Activated CD4-positive, alpha-beta memory T cell treated with anti-CD3 and anti-CD28 coated beads for 36 hours (primary cell): ENCODE measurements at regions of chr6 and their contacts with region 1.

Region 1: DNA sequence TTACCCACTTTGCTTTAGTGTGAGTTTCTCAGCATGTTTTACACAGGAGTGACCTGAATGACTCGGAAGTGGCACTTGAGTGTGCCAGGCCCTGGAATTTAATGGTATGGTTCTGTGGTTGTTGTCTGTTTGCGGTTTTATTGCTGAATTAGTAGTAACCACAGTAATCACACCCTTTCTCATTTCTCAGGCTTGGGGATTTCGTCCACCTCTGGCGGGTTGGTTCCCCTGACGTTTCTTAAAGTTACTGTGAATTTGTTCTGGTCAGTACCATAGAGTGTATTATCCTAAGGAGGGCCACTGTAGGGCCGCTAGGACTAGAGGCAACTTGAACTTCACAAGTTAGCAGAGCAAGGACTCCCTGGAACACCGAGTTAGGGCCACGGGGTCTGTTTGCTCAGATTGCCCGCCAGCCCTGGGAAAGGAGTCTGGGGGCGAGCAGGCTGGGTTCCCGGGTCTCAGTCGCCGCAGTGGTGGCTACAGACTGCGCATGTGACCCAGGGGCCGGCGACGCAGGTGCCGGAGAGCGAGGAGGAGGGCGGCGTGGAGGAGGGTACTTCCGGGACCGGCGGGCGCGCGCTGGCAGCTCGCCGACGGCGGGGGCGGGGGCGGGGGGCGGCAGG is 546 bp upstream of the KLHL32 start:
- DNase-seq: no peak
- H3K4me3 Mint-ChIP-seq: peak overlapping the region; percentile 77
- H3K27ac Mint-ChIP-seq: peak overlapping the region; percentile 77
- H3K4me1 Mint-ChIP-seq: peaks cover 37% of the 10 kb centered on the region
- H3K27me3 Mint-ChIP-seq: no peaks in the 10 kb centered on the region

Region 2: DNA sequence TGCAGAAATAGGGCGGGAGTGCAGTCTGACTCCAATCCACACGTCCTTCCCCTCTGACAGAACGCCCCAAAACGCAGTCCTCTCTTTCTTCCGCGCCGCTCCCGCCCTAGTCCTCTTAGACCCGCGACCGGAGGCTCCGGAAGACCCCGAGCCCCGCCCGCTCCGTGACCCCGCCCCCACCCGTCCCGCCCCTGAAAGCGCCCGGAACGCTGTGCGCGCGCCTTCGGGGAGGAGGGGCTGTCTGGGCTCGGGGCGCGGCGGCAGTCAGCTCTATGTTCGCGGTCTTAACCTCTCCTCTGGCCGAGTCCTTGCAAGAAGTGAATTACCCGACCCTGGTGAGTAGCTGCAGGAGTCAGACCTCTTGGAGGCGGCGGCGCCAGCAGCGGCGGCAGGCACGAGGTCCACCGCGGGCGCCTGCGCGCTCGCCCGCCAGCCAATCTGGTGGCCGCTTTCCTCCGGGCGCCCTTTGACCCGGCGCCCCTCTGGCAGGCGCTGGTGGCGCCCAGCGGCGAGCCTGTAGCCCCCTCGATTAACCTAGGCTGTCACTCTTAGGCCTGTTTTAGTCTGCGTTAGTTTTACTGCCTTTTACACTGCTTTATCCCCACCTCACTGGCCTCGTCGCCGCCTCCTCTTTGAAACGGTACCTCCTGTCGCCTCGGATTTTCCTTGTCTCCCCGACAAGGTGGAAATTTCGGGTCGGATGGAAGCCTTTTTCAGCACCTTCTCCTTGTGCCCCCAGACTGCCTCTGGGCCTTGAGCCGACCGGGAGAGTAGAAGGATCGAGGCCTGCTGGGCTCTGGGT is 1346.5 kb before region 1 on chr6 and contains the start of gene MANEA:
- CTCF ChIA-PET with region 1: no interaction called
- POLR2A ChIA-PET with region 1: no interaction called
- intact Hi-C with region 1: loop called (anchors 10 kb)
- DNase-seq: peak; percentile 85
- H3K4me3 Mint-ChIP-seq: peak within 1 kb of the TSS; percentile 90
- H3K27ac Mint-ChIP-seq: peak within 1 kb of the TSS; percentile 96
- H3K4me1 Mint-ChIP-seq: peaks cover 38% of the 10 kb centered on the region
- H3K27me3 Mint-ChIP-seq: no peaks in the 10 kb centered on the region
- total RNA-seq, gene MANEA: 16.3 to 18.7 TPM

Region 3: DNA sequence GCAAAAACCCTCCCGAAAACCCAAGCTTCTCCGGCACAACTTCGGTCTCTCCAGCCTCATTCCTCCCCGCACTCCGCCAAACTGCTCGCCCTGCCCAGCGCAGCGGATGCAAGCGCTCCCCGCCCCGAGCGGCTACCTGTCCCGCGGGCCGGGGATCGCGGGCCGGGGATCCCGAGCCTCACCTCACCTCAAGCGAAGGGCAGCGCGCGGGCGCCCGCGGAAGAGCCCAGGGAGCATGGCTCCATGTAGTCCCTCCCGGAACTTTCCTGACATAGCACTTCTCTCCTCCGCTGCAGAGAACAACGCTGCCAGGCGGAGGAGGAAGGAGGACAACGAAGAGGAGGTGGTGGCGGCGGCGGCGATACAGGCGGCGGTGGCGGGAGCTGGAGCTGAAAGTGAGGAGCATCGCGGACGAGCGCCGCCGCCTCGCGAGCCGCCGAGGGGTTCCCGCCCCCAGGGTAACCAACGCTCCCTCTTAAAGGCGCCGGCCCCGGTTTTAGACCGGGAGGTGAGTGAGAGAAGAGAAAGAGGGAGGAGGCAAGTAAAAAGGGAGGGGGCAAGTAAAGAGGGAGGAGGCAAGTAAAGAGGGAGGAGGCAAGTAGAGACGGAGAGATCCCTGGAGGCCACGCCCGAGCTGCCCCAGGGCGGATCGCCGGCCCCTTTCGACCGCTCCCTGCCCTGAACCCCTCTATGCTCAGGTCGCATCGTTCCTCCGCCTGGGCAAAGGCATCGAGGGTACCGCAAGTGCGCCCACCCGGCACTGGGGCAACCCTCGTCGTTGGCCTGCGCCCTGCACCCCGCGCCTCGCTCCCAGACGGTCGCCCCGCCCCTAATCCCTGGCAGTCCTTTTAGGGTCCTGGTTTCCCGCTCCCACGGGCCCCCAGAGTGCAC is 86.7 kb before region 1 on chr6 and contains the start of gene GPR63:
- CTCF ChIA-PET with region 1: no interaction called
- POLR2A ChIA-PET with region 1: interaction called, 3 read pairs
- intact Hi-C with region 1: loop called (anchors 1 kb)
- DNase-seq: peak; percentile 87
- H3K4me3 Mint-ChIP-seq: peak within 1 kb of the TSS; percentile 95
- H3K27ac Mint-ChIP-seq: peak within 1 kb of the TSS; percentile 50
- H3K4me1 Mint-ChIP-seq: peaks cover 17% of the 10 kb centered on the region
- H3K27me3 Mint-ChIP-seq: peaks cover 16% of the 10 kb centered on the region
- total RNA-seq, gene GPR63: 1.5 to 1.7 TPM

Region 4: DNA sequence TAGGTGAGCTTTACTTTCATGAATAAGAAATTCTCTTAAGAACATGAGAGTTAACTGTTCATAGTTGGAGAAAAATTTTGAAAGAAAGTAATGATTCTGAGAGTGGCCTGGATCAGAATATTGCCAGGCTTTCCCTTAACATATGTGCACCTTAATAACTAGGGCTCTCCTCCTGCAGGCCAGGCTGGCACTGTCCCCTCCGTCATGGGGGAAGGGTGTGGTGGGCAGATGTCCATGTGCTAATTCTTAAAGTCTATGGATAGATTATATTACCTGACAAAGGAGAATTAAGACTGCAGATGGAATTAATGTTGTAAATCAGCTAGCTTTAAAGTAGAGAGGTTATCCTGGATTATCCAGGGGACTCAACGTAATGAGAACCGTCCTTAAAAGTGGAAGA is 10.4 kb before region 1 on chr6:
- CTCF ChIA-PET with region 1: interaction called, 8 read pairs
- POLR2A ChIA-PET with region 1: interaction called, 29 read pairs
- intact Hi-C with region 1: loop called (anchors 1 kb)
- DNase-seq: no peak
- H3K4me3 Mint-ChIP-seq: no peak overlapping the region
- H3K27ac Mint-ChIP-seq: no peak overlapping the region
- H3K4me1 Mint-ChIP-seq: peaks cover 4% of the 10 kb centered on the region
- H3K27me3 Mint-ChIP-seq: peaks cover 34% of the 10 kb centered on the region

Region 5: GRCh38 chr6:96947055-96947454 is 23.1 kb after region 1 on chr6:
- CTCF ChIA-PET with region 1: interaction called, 4 read pairs
- POLR2A ChIA-PET with region 1: no interaction called
- intact Hi-C with region 1: loop called (anchors 2 kb)
- DNase-seq: peak; percentile 15
- H3K4me3 Mint-ChIP-seq: no peak overlapping the region
- H3K27ac Mint-ChIP-seq: no peak overlapping the region
- H3K4me1 Mint-ChIP-seq: peaks cover 7% of the 10 kb centered on the region
- H3K27me3 Mint-ChIP-seq: no peaks in the 10 kb centered on the region

Region 6: GRCh38 chr6:97040355-97040860 is 116.4 kb after region 1 on chr6:
- CTCF ChIA-PET with region 1: no interaction called
- POLR2A ChIA-PET with region 1: no interaction called
- intact Hi-C with region 1: no loop called
- DNase-seq: no peak
- H3K4me3 Mint-ChIP-seq: no peak overlapping the region
- H3K27ac Mint-ChIP-seq: no peak overlapping the region
- H3K4me1 Mint-ChIP-seq: no peaks in the 10 kb centered on the region
- H3K27me3 Mint-ChIP-seq: peaks cover 6% of the 10 kb centered on the region

Region 7: DNA sequence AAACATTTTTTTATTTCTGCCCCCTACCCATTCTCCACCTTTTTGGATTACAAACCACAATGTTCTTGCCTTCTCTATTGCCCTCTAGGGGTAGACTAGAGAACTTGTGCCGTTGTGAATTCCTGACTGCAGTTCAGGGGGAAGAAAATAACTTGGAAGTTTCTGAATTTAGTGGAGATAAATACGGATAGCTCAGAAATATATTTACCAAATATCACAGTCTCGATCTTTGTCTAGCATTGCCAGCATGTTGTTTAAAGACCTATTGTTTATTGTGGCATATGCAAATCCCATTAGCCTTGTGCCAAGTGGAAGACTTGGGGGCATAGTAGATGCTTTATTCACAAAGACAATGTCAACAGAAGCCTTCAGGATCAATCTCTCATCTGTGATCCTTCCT is 513.1 kb after region 1 on chr6:
- CTCF ChIA-PET with region 1: no interaction called
- POLR2A ChIA-PET with region 1: no interaction called
- intact Hi-C with region 1: no loop called
- DNase-seq: no peak
- H3K4me3 Mint-ChIP-seq: no peak overlapping the region
- H3K27ac Mint-ChIP-seq: no peak overlapping the region
- H3K4me1 Mint-ChIP-seq: no peaks in the 10 kb centered on the region
- H3K27me3 Mint-ChIP-seq: peaks cover 5% of the 10 kb centered on the region

Region 8: DNA sequence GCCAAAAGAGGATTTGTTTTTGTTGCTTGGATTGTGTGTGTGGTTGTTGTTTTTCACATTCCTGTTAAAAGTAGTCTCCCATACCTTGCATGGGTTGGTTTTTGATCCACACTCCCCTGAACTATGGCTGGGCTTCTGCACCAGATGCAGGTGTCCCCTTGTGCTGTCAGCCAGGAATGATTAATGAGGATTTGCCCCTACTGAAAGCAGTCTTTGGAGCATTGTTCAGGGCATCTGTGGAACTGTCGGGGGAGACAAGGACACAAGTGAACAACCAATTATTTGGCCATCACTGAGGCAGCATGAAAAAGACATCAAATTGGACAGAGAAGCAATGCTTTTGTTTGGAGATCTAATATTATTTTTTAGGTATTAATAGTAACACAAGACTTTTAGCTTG is 732.3 kb after region 1 on chr6:
- CTCF ChIA-PET with region 1: no interaction called
- POLR2A ChIA-PET with region 1: no interaction called
- intact Hi-C with region 1: no loop called
- DNase-seq: no peak
- H3K4me3 Mint-ChIP-seq: no peak overlapping the region
- H3K27ac Mint-ChIP-seq: no peak overlapping the region
- H3K4me1 Mint-ChIP-seq: no peaks in the 10 kb centered on the region
- H3K27me3 Mint-ChIP-seq: no peaks in the 10 kb centered on the region